H1 (cell line): ENCODE measurements at regions of chr17 and their contacts with region 1.

Region 1: DNA sequence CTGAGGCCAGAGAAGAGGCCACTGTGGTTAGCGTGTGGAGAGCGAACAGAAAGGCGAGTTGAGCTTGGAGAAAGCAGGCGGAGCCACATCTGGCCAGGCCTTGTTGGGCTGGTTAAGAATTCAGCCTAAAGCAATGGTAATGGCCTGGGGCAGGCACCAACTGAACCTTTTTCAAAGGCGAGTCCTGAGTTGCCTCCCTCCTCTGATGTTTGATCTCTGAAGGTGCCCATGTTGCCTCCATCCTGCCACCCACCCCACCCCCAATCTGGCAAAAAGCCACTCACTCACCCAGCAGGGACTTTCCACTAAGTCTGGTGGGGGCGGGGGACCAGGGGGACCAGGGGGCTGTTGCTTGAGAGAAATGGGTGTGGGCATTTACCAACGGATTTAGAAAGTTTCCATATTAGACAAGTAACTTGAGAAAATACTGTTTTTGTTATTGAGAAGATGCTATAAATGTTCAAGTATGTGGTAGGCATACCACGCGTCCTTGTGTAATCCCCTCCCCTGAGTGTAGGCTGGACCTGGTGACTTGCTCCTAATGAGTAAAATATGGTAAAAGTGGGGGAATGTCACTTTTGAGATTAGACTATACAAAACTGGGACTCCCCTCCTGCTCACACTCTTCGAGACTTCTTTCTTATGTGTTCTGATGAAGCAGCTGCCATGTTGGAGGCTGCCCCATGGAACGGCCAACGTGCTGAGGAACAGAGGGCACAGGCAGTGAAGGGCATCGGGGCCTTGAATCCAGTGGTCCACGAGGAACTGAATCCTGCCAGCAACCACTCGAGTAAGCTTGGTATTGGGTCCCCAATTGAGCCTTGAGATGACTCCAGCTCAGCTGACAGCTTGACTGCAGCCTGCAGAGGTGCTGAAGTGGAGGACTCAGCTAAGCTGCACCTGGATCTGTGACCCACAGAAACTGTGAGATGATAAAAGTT is 29.9 kb upstream of the TNS4 start:
- DNase-seq: no peak
- H3K4me3 ChIP-seq: no peak overlapping the region
- H3K27ac ChIP-seq: no peak overlapping the region
- H3K4me1 ChIP-seq: peaks cover 0 to 8% (median 3%) of the 10 kb centered on the region in 4 experiments; a peak in 1 of 7 replicates
- H3K27me3 ChIP-seq: no peaks in the 10 kb centered on the region
- CTCF ChIP-seq: no peak
- EP300 ChIP-seq: no peak
- POLR2A ChIP-seq: no peak
- RAD21 ChIP-seq: no peak

Region 2: GRCh38 chr17:40309031-40309948 is 222.0 kb before region 1 on chr17 and contains the start of gene RARA:
- CTCF ChIA-PET with region 1: interaction called, 10 read pairs
- POLR2A ChIA-PET with region 1: no interaction called
- DNase-seq: peak in 1 of 2 experiments; percentile 86
- H3K4me3 ChIP-seq: peak within 1 kb of the TSS; percentile 65 to 92 (median 80)
- H3K27ac ChIP-seq: no peak within 1 kb of the TSS
- H3K4me1 ChIP-seq: peaks cover 15 to 38% (median 27%) of the 10 kb centered on the region in 4 experiments
- H3K27me3 ChIP-seq: no peaks in the 10 kb centered on the region; a peak in 1 of 7 replicates
- CTCF ChIP-seq: no peak; a peak in 1 of 4 replicates
- EP300 ChIP-seq: no peak
- POLR2A ChIP-seq: 0 out of 3 replicates have a peak, but pooled peaks of 1 of the 2 experiments have one; percentile 47
- RAD21 ChIP-seq: peak in 1 of 2 experiments; percentile 12; a peak in 1 of 4 replicates
- total RNA-seq, gene RARA: 13.4 and 16.5 TPM in 2 replicates

Region 3: GRCh38 chr17:40382251-40382650 is 149.1 kb before region 1 on chr17:
- CTCF ChIA-PET with region 1: interaction called, 10 read pairs
- POLR2A ChIA-PET with region 1: no interaction called
- DNase-seq: no peak
- H3K4me3 ChIP-seq: no peak overlapping the region
- H3K27ac ChIP-seq: no peak overlapping the region
- H3K4me1 ChIP-seq: no peaks in the 10 kb centered on the region
- H3K27me3 ChIP-seq: no peaks in the 10 kb centered on the region
- CTCF ChIP-seq: no peak
- EP300 ChIP-seq: no peak
- POLR2A ChIP-seq: no peak
- RAD21 ChIP-seq: no peak

Region 4: GRCh38 chr17:40417609-40418427 is 113.5 kb before region 1 on chr17 and contains the start of gene TOP2A:
- CTCF ChIA-PET with region 1: interaction called, 38 read pairs
- POLR2A ChIA-PET with region 1: interaction called, 5 read pairs
- DNase-seq: peak; percentile 98 to 99
- H3K4me3 ChIP-seq: peak within 1 kb of the TSS; percentile 81 to 97 (median 95)
- H3K27ac ChIP-seq: peak within 1 kb of the TSS; percentile 55; the same call in 1 of the 2 replicates
- H3K4me1 ChIP-seq: peaks cover 2 to 10% (median 6%) of the 10 kb centered on the region in 4 experiments
- H3K27me3 ChIP-seq: no peaks in the 10 kb centered on the region
- CTCF ChIP-seq: no peak
- EP300 ChIP-seq: no peak
- POLR2A ChIP-seq: 0 out of 3 replicates have a peak, but pooled peaks of 1 of the 2 experiments have one; percentile 53
- RAD21 ChIP-seq: no peak
- total RNA-seq, gene TOP2A: 276 and 291 TPM in 2 replicates

Region 5: GRCh38 chr17:40433551-40434415 is 97.5 kb before region 1 on chr17:
- CTCF ChIA-PET with region 1: interaction called, 435 read pairs
- POLR2A ChIA-PET with region 1: interaction called, 3 read pairs
- DNase-seq: peak in 1 of 2 experiments; percentile 72
- H3K4me3 ChIP-seq: no peak overlapping the region
- H3K27ac ChIP-seq: no peak overlapping the region
- H3K4me1 ChIP-seq: peaks cover 0 to 3% (median 2%) of the 10 kb centered on the region in 4 experiments; a peak in 4 of 7 replicates
- H3K27me3 ChIP-seq: no peaks in the 10 kb centered on the region
- CTCF ChIP-seq: peak; percentile 72 to 91 (median 86)
- EP300 ChIP-seq: no peak
- POLR2A ChIP-seq: 0 out of 3 replicates have a peak, but pooled peaks of 1 of the 2 experiments have one; percentile 26
- RAD21 ChIP-seq: peak; percentile 73 to 76

Region 6: DNA sequence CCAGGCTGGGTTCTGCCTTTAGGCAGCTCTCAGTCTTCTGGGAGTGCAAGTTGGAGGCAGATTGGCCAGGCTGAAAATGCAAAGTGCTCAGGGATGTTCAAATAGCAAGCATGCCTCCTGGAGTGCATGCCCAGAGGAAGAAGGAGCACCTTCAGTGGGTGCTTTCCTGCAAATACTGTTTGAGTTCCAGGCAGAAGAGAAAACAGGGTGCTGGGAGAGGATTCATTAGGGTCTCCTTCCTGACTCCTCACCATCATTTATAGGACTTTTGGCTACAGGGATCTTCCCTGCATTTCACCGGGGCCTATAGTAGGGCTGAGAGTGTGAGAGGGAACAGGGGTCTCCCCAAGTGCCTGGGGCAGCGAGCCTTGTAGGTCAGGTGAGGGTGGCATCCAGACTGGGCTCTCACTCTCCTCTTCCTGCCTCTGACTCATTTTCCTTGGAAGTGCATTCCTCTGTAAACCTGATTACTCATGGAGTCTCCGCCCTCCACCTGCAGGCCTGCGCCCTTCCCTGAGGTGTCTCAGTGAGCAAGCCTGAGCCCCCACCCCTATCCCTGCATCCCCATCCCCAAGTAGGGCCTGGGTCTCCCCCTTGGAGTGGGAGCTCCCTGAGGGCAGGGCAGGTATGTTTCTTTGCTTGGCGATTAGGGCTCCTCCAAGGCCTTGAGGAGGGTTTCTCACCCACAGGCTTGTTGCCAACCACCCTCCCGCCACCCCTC is 12.8 kb before region 1 on chr17:
- CTCF ChIA-PET with region 1: interaction called, 13 read pairs
- POLR2A ChIA-PET with region 1: interaction called, 3 read pairs
- DNase-seq: no peak
- H3K4me3 ChIP-seq: no peak overlapping the region
- H3K27ac ChIP-seq: no peak overlapping the region
- H3K4me1 ChIP-seq: peaks cover 0 to 10% (median 2%) of the 10 kb centered on the region in 4 experiments; a peak in 5 of 7 replicates
- H3K27me3 ChIP-seq: no peaks in the 10 kb centered on the region
- CTCF ChIP-seq: no peak
- EP300 ChIP-seq: no peak
- POLR2A ChIP-seq: no peak
- RAD21 ChIP-seq: no peak

Region 7: GRCh38 chr17:40551879-40552768 is 20.8 kb after region 1 on chr17:
- CTCF ChIA-PET with region 1: interaction called, 80 read pairs
- POLR2A ChIA-PET with region 1: interaction called, 3 read pairs
- DNase-seq: no peak
- H3K4me3 ChIP-seq: no peak overlapping the region
- H3K27ac ChIP-seq: no peak overlapping the region
- H3K4me1 ChIP-seq: peaks cover 0 to 7% (median 2%) of the 10 kb centered on the region in 4 experiments; a peak in 2 of 7 replicates
- H3K27me3 ChIP-seq: no peaks in the 10 kb centered on the region; a peak in 1 of 7 replicates
- CTCF ChIP-seq: no peak
- EP300 ChIP-seq: no peak
- POLR2A ChIP-seq: no peak
- RAD21 ChIP-seq: no peak